Body of pancreas (tissue), 4 donors: ENCODE measurements at regions of chr21 and their contacts with region 1.

Region 1: DNA sequence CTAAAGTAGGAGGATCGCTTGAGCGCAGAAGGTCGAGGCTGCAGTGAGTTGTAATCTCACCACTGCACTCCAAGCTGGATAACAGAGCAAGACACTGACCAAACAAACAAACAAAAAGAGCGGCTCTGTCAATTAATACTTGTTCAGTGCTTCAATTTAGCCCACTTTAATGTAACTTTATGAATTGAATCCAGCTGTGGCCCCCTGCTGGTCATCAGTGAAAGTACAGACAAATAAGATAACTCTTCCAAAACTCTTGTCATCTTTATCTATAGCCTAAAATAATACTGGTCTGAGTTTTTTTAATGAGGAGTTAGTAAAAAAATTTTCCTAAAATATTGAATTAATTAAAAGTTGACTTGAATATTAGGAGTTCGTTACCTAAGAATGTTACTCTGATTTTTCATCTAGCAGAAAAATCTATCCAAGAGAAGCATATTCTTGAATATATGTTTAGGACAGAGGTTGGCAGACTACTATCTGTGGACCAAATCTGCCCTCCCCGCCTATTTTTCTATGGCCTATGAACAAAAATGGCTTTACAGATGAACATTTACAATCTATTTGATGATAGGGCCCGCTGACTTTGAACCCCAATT is 26.1 kb downstream of the ATP5PF start:
- DNase-seq: peak in 3 of 4 donors; percentile 32 to 44 (median 42)
- ATAC-seq: no peak
- H3K4me3 ChIP-seq: no peak overlapping the region
- H3K27ac ChIP-seq: no peak overlapping the region
- H3K4me1 ChIP-seq: no peaks in the 10 kb centered on the region
- H3K27me3 ChIP-seq: no peaks in the 10 kb centered on the region
- CTCF ChIP-seq: peak; percentile 58 to 77 (median 65)
- POLR2A ChIP-seq: no peak

Region 2: GRCh38 chr21:25615880-25616279 is 92.7 kb before region 1 on chr21:
- intact Hi-C with region 1: loop called (anchors 10 kb)
- DNase-seq: no peak
- ATAC-seq: no peak
- H3K4me3 ChIP-seq: no peak overlapping the region
- H3K27ac ChIP-seq: no peak overlapping the region
- H3K4me1 ChIP-seq: no peaks in the 10 kb centered on the region
- H3K27me3 ChIP-seq: no peaks in the 10 kb centered on the region
- CTCF ChIP-seq: no peak
- POLR2A ChIP-seq: no peak

Region 3: DNA sequence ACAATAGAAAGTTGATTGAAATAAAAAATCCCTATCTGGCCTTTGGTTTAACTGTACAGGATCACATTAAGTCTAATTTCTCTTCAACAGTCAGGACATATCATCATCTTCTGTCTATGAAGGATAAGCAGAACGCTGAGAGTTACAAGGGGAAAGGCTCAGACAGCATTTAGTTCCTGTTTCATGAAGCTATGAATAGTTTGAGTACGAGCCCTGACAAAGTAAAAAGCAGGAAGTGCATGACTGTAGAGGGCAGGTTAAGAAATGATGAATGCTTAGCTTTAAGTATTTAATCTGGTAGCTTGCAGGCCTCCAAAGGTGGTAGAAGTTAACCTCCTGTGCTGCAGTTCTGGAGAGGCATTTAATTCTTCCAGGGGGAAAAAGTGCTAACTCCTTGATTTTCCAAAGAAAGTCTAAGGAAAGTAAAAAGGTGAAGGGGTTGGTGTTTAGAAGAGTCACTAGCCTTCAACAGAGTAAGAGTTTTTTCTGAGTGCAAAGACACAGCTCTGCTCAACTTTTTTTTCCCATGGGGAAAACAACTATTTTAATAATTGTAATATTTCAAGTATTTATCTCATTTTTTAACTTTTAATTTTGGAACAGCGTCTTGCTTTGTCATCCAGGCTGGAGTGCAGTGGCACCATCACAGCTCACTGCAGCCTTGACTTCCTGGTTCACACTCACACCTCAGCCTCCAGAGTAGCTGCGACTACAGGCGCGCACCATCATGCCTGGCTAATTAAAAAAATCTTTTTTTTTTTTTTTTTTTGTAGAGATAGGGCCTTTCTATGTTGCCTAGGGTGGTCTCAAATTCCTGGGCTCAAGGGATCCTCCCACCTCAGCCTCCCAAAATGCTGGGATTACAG is 259.2 kb after region 1 on chr21:
- intact Hi-C with region 1: no loop called
- DNase-seq: peak in 1 of 4 donors; percentile 12
- ATAC-seq: no peak
- H3K4me3 ChIP-seq: no peak overlapping the region
- H3K27ac ChIP-seq: peak overlapping the region in 2 of 4 donors; percentile 44 to 65
- H3K4me1 ChIP-seq: peaks cover 7% of the 10 kb centered on the region
- H3K27me3 ChIP-seq: no peaks in the 10 kb centered on the region
- CTCF ChIP-seq: no peak
- POLR2A ChIP-seq: no peak